Activated CD8-positive, alpha-beta T cell treated with anti-CD3 and anti-CD28 coated beads for 36 hours (primary cell): ENCODE measurements at regions of chr4 and their contacts with region 1.

Region 1: DNA sequence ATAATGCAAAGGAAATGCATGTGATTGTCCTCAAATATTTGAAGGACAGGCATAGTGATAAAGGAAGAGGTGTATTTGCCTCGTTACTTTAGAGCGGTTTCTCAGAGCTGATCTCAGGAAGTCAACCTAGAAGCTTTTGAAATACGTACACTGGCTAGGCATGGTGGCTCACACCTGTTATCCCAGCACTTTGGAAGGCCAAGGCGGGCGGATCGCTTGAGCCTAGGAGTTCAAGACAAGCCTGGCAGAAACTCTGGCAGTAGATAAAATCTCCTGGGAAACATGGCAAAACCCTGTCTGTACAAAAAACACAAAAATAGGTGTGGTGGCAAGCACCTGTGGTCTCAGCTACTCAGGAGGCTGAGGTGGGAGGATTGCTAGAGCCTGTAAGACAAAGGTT is 24.9 kb downstream of the SMARCAD1 start:
- DNase-seq: no peak
- ATAC-seq: no peak
- H3K4me3 Mint-ChIP-seq: no peak overlapping the region
- H3K27ac Mint-ChIP-seq: no peak overlapping the region
- H3K4me1 Mint-ChIP-seq: peaks cover 7% of the 10 kb centered on the region
- H3K27me3 Mint-ChIP-seq: no peaks in the 10 kb centered on the region
- CTCF ChIP-seq: no peak

Region 2: GRCh38 chr4:94338681-94339351 is 106.3 kb after region 1 on chr4:
- CTCF ChIA-PET with region 1: no interaction called
- POLR2A ChIA-PET with region 1: no interaction called
- intact Hi-C with region 1: loop called (anchors 5 kb)
- DNase-seq: no peak
- ATAC-seq: peak; percentile 81
- H3K4me3 Mint-ChIP-seq: peak overlapping the region; percentile 49
- H3K27ac Mint-ChIP-seq: peak overlapping the region; percentile 90
- H3K4me1 Mint-ChIP-seq: peaks cover 16% of the 10 kb centered on the region
- H3K27me3 Mint-ChIP-seq: no peaks in the 10 kb centered on the region
- CTCF ChIP-seq: no peak

Region 3: GRCh38 chr4:94491322-94491721 is 258.8 kb after region 1 on chr4:
- CTCF ChIA-PET with region 1: no interaction called
- POLR2A ChIA-PET with region 1: no interaction called
- intact Hi-C with region 1: no loop called
- DNase-seq: no peak
- ATAC-seq: no peak
- H3K4me3 Mint-ChIP-seq: no peak overlapping the region
- H3K27ac Mint-ChIP-seq: no peak overlapping the region
- H3K4me1 Mint-ChIP-seq: no peaks in the 10 kb centered on the region
- H3K27me3 Mint-ChIP-seq: no peaks in the 10 kb centered on the region
- CTCF ChIP-seq: no peak